Psoas muscle (tissue), 8 donors: ENCODE measurements at regions of chr16 and their contacts with region 1.

Region 1: GRCh38 chr16:57591086-57591869 is 37.2 kb upstream of the ADGRG1 start:
- DNase-seq: peak; percentile 61 to 71
- ATAC-seq: peak; percentile 66 to 87 (median 85)
- H3K4me3 ChIP-seq: no peak overlapping the region
- H3K27ac ChIP-seq: no peak overlapping the region
- H3K4me1 ChIP-seq: no peaks in the 10 kb centered on the region
- H3K27me3 ChIP-seq: peaks cover 0 to 7% (median 0%) of the 10 kb centered on the region in 3 donors
- CTCF ChIP-seq: peak; percentile 79

Region 2: GRCh38 chr16:57503366-57503765 is 87.9 kb before region 1 on chr16:
- intact Hi-C with region 1: no loop called
- DNase-seq: peak in 1 of 2 donors; percentile 26
- ATAC-seq: no peak
- H3K4me3 ChIP-seq: no peak overlapping the region
- H3K27ac ChIP-seq: no peak overlapping the region
- H3K4me1 ChIP-seq: no peaks in the 10 kb centered on the region
- H3K27me3 ChIP-seq: no peaks in the 10 kb centered on the region
- CTCF ChIP-seq: no peak

Region 3: GRCh38 chr16:57720142-57720575 is 128.9 kb after region 1 on chr16:
- intact Hi-C with region 1: loop called in 1 of 2 experiments (anchors 5 kb)
- DNase-seq: no peak
- ATAC-seq: peak in 2 of 4 donors; percentile 46 to 48
- H3K4me3 ChIP-seq: no peak overlapping the region
- H3K27ac ChIP-seq: no peak overlapping the region
- H3K4me1 ChIP-seq: no peaks in the 10 kb centered on the region
- H3K27me3 ChIP-seq: no peaks in the 10 kb centered on the region
- CTCF ChIP-seq: peak; percentile 36